ENCODE measurements at regions of chr14 and their contacts with region 1.

Region 1: DNA sequence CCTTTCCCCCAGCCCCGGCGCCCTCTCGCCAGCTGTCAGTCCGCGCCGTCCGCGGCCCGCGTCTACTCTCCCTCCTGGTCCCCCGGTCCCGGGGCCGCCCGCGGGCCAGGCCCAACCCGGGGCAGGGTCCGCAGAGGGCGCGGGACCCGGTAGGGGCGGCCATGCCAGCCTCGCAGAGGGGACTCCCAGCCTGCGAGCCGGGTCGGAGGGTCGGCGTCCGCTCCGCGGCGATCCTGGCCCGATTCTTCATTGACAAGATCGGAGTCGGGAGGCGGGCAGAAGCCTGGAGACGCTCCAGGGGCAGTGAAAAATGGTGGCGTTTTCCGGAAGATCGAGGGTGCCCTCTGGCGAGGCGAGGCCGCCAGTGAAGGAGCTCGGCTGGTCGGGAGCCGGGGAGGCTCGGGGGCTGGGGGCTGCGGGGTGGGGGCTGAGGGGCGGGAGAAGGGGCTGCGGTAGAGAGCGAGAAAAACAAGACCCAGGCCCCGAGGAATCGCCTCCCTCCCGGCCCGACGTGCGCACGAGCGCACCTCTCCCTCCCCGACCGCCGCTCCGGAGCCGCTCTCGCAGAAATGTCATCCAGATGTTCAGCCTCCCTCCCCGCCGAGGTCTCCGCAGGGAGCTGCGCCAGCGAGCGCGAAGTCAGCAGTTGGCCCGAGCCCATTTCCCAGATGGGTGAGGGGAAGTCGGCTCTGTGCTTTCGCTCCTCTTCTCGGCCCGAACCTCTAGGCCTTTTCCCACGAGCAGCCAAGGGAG is 647 bp upstream of the TGFB3 start:
- DNase-seq: peak; percentile 85 to 89 (median 87)
- ATAC-seq: peak; percentile 21 to 78 (median 62)
- H3K4me3 ChIP-seq: peak overlapping the region; percentile 56 to 88 (median 78)
- H3K27ac ChIP-seq: peak overlapping the region; percentile 83 to 99 (median 96)
- H3K4me1 ChIP-seq: peaks cover 3 to 65% (median 33%) of the 10 kb centered on the region in 12 donors
- H3K27me3 ChIP-seq: no peaks in the 10 kb centered on the region
- CTCF ChIP-seq: peak; percentile 50 to 87 (median 70)
- POLR2A ChIP-seq: no peak

Region 2: GRCh38 chr14:75794615-75795038 is 187.8 kb before region 1 on chr14:
- intact Hi-C with region 1: loop called in 8 of 10 experiments (anchors 1 to 10 kb)
- DNase-seq: no peak
- ATAC-seq: peak; percentile 92 to 99 (median 98)
- H3K4me3 ChIP-seq: no peak overlapping the region
- H3K27ac ChIP-seq: peak overlapping the region in 3 of 12 donors; percentile 15 to 54 (median 26)
- H3K4me1 ChIP-seq: peaks cover 0 to 11% (median 5%) of the 10 kb centered on the region in 12 donors
- H3K27me3 ChIP-seq: no peaks in the 10 kb centered on the region
- CTCF ChIP-seq: peak; percentile 17 to 71 (median 53)
- POLR2A ChIP-seq: no peak

Region 3: GRCh38 chr14:75800792-75801191 is 181.7 kb before region 1 on chr14:
- intact Hi-C with region 1: loop called in 7 of 10 experiments (anchors 2 to 10 kb)
- DNase-seq: no peak
- ATAC-seq: no peak
- H3K4me3 ChIP-seq: no peak overlapping the region
- H3K27ac ChIP-seq: no peak overlapping the region
- H3K4me1 ChIP-seq: peaks cover 0 to 26% (median 12%) of the 10 kb centered on the region in 12 donors
- H3K27me3 ChIP-seq: no peaks in the 10 kb centered on the region
- CTCF ChIP-seq: no peak
- POLR2A ChIP-seq: no peak

Region 4: GRCh38 chr14:75906676-75907280 is 75.7 kb before region 1 on chr14:
- intact Hi-C with region 1: loop called (anchors 1 to 5 kb)
- DNase-seq: peak in 4 of 5 donors; percentile 50 to 66 (median 57)
- ATAC-seq: peak in 3 of 4 donors; percentile 32 to 81 (median 65)
- H3K4me3 ChIP-seq: no peak overlapping the region
- H3K27ac ChIP-seq: peak overlapping the region in 2 of 12 donors; percentile 19 to 20
- H3K4me1 ChIP-seq: peaks cover 0 to 26% (median 7%) of the 10 kb centered on the region in 12 donors
- H3K27me3 ChIP-seq: no peaks in the 10 kb centered on the region
- CTCF ChIP-seq: peak; percentile 83 to 97 (median 92)
- POLR2A ChIP-seq: no peak